CD4-positive, alpha-beta memory T cell (primary cell): ENCODE measurements at regions of chr19 and their contacts with region 1.

Region 1: GRCh38 chr19:46081928-46082727 is 41.3 kb upstream of the IGFL4 start:
- DNase-seq: peak in 3 of 5 donors; percentile 9 to 15 (median 9)
- H3K4me3 ChIP-seq: no peak overlapping the region
- H3K4me3 Mint-ChIP-seq: no peak overlapping the region
- H3K27ac ChIP-seq: no peak overlapping the region
- H3K27ac Mint-ChIP-seq: no peak overlapping the region
- H3K4me1 ChIP-seq: peaks cover 7% of the 10 kb centered on the region
- H3K4me1 Mint-ChIP-seq: peaks cover under 1 to 4% (median 3%) of the 10 kb centered on the region in 4 donors
- H3K27me3 ChIP-seq: peaks cover 19% of the 10 kb centered on the region
- H3K27me3 Mint-ChIP-seq: peaks cover 34 to 44% of the 10 kb centered on the region in 2 donors

Region 2: DNA sequence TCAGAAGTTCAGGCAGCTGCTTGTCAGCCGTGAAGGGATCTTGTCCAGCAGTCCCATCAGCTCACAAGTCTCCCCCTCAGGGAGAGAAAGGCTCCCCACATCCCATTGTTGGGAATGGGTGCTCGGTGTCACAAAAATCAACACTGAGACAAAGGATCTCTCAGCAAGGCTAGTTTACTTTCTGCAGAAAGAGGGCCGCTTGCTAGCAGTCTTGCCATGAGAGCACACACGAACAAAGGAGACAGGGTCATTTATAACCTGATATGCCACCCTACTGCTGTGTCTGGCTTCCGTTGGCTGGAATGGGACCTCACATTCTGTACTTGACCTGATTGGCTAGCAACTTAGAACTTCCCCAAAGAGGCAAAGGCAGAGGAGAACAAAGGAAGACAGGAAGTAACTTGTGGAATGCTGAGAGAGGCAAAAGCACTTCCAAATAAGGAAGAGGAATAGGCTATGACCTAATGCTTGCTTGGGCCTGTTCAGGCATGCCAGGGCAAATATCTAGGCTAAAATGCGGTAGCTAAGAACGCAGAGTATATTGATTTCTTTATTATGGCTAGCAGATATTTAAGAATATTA is 51.1 kb after region 1 on chr19:
- CTCF ChIA-PET with region 1: no interaction called
- POLR2A ChIA-PET with region 1: no interaction called
- intact Hi-C with region 1: no loop called
- DNase-seq: no peak
- H3K4me3 ChIP-seq: no peak overlapping the region
- H3K4me3 Mint-ChIP-seq: no peak overlapping the region
- H3K27ac ChIP-seq: no peak overlapping the region
- H3K27ac Mint-ChIP-seq: no peak overlapping the region
- H3K4me1 ChIP-seq: no peaks in the 10 kb centered on the region
- H3K4me1 Mint-ChIP-seq: no peaks in the 10 kb centered on the region
- H3K27me3 ChIP-seq: peaks cover 4% of the 10 kb centered on the region
- H3K27me3 Mint-ChIP-seq: peaks cover 27 to 31% of the 10 kb centered on the region in 2 donors

Region 3: GRCh38 chr19:46265217-46265828 is 183.2 kb after region 1 on chr19:
- CTCF ChIA-PET with region 1: interaction called, 7 read pairs
- POLR2A ChIA-PET with region 1: no interaction called
- intact Hi-C with region 1: loop called (anchors 1 kb)
- DNase-seq: peak; percentile 72 to 75 (median 73)
- H3K4me3 ChIP-seq: no peak overlapping the region
- H3K4me3 Mint-ChIP-seq: no peak overlapping the region
- H3K27ac ChIP-seq: no peak overlapping the region
- H3K27ac Mint-ChIP-seq: peak overlapping the region in 1 of 7 donors; percentile 24
- H3K4me1 ChIP-seq: peaks cover 18% of the 10 kb centered on the region
- H3K4me1 Mint-ChIP-seq: peaks cover 6 to 29% (median 17%) of the 10 kb centered on the region in 4 donors
- H3K27me3 ChIP-seq: peaks cover under 1% of the 10 kb centered on the region
- H3K27me3 Mint-ChIP-seq: peaks cover 10 to 25% of the 10 kb centered on the region in 2 donors